ENCODE measurements at regions of chr21 and their contacts with region 1.

Region 1: GRCh38 chr21:42164064-42164789 is 54.7 kb upstream of the ABCG1 start:
- DNase-seq: peak; percentile 48
- H3K4me3 Mint-ChIP-seq: no peak overlapping the region
- H3K27ac Mint-ChIP-seq: no peak overlapping the region
- H3K4me1 Mint-ChIP-seq: no peaks in the 10 kb centered on the region
- H3K27me3 Mint-ChIP-seq: peaks cover 7% of the 10 kb centered on the region
- CTCF ChIP-seq: peak; percentile 17

Region 2: DNA sequence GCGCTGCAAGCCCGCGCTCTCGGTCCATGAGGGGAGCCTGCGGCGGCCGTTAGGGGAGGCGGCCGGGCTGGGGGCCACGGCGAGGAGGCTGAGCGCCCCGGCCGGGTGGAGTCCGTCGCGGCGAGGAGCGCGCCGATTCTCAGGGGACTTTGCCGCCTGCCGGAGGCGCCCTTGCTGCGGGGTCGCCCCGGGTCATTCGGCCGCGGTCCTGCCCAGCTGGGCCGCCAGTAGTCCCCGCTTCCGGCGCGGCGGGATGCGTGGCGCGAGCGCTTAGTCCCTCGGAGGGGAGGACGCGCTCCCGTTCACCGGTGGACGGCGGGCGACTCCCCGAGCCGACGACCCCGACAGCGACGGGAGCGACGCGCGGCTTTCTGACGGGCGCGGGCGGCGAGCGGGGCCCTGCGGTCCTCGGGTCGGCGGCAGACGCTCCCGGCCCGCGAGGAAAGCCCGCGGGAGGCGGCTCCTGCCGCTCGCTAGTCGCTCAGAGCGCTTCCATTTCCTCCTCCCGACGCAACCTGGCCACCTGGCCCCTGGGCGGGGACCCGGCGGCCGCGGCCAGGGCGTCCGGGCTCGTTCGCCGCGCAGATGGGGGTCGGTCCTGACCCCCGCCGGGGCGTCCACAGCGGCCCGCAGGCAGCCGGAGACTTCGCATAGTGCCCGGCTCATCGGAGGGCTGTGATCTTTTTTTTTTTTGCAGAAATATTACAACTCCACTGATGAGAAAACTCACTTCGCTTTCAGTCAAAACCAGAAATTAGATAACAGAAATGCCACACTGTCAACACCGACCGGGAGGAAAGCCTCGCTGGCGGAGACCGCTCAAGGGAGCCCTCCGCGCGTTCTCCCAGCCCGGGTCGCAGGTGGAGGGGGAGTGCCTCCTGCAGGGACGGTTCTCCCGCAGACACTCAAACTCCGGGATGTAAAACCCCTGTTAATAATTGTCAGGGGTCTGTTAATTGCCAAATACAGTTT is 153.4 kb before region 1 on chr21:
- CTCF ChIA-PET with region 1: no interaction called
- intact Hi-C with region 1: no loop called
- DNase-seq: peak; percentile 19
- H3K4me3 Mint-ChIP-seq: peak overlapping the region; percentile 94
- H3K27ac Mint-ChIP-seq: peak overlapping the region; percentile 98
- H3K4me1 Mint-ChIP-seq: peaks cover 8% of the 10 kb centered on the region
- H3K27me3 Mint-ChIP-seq: peaks cover 22% of the 10 kb centered on the region
- CTCF ChIP-seq: no peak

Region 3: DNA sequence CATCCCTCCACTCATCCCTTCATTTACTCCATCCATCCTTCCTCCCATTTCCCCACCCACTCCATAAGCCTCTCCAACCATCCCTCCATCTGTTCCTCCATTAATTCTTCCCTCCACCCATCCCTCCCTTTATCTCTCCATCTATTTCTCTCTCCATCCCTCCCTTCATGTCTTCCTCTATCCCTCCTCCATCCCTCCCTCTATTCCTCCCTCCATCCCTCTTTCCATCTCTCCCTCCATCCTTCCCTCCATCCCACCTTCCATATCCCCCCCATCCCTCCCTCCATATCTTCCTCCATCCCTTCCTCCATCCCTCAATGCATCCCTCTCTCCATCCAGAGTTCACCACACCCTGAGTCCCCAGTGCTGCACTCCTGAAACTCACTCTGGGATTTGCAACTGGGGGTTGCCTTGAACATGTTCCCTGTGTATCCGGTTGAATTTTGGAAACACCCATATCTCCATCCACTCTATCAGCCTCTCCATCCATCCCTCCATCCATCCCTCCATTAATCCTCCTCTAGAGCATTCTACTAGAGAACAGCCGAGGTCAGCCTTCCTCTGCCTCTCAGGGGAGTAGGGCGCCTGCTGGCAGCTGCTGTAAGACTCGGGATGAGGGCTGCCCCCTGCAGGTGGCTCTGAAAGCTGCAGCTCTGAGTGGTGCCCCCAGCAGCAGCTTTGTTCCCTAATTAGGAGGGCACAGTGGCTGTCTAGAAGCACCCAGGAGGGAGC is 94.1 kb after region 1 on chr21:
- CTCF ChIA-PET with region 1: interaction called, 11 read pairs
- intact Hi-C with region 1: no loop called
- DNase-seq: peak; percentile 68
- H3K4me3 Mint-ChIP-seq: no peak overlapping the region
- H3K27ac Mint-ChIP-seq: no peak overlapping the region
- H3K4me1 Mint-ChIP-seq: no peaks in the 10 kb centered on the region
- H3K27me3 Mint-ChIP-seq: peaks cover 58% of the 10 kb centered on the region
- CTCF ChIP-seq: peak; percentile 56

Region 4: GRCh38 chr21:42299324-42300044 is 135.3 kb after region 1 on chr21:
- CTCF ChIA-PET with region 1: no interaction called
- intact Hi-C with region 1: no loop called
- DNase-seq: peak; percentile 16
- H3K4me3 Mint-ChIP-seq: no peak overlapping the region
- H3K27ac Mint-ChIP-seq: no peak overlapping the region
- H3K4me1 Mint-ChIP-seq: no peaks in the 10 kb centered on the region
- H3K27me3 Mint-ChIP-seq: peaks cover 17% of the 10 kb centered on the region
- CTCF ChIP-seq: no peak

Region 5: GRCh38 chr21:42456457-42456856 is 292.2 kb after region 1 on chr21:
- CTCF ChIA-PET with region 1: no interaction called
- intact Hi-C with region 1: loop called (anchors 10 kb)
- DNase-seq: no peak
- H3K4me3 Mint-ChIP-seq: no peak overlapping the region
- H3K27ac Mint-ChIP-seq: no peak overlapping the region
- H3K4me1 Mint-ChIP-seq: peaks cover 3% of the 10 kb centered on the region
- H3K27me3 Mint-ChIP-seq: no peaks in the 10 kb centered on the region
- CTCF ChIP-seq: no peak

Region 6: DNA sequence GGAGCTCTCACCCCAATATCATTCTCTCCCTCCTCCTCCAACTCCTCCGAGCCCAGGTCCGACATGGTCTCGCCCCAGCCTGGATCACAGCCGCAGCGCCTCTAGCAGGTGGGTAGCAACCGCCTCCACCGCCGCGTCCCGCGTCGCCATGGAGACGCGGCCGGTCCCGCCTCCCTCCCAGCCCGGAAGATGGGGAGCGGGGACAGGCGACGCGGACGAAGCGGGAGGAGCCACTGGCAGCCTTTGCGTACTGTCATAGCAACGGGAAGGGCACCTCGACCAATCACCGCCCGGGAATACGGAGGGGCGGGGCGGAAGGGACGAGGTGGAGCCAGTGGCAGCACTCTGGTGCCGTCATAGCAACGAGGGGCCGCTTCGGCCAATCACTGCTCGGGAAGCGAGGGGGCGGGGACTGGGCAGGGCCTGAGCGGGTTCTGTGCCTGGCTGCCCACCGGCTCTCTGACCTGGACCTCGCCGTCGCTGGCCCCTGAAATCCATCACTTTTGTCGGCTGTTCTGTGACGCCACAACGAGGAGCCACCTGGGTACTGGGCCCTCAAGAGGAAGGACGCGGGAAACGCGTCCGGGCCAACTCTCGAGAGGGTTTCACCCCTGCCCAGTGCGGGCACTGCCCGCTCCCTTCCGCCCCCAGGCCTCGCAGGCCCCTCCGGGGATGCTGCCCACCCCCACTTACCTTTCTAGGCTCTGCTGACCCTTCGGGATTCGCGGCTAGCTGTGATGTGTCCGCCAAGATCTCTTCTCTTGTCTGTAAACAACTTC is 332.1 kb after region 1 on chr21 and contains the start of gene RSPH1:
- CTCF ChIA-PET with region 1: no interaction called
- intact Hi-C with region 1: no loop called
- DNase-seq: peak; percentile 98
- H3K4me3 Mint-ChIP-seq: peak within 1 kb of the TSS; percentile 100
- H3K27ac Mint-ChIP-seq: peak within 1 kb of the TSS; percentile 91
- H3K4me1 Mint-ChIP-seq: peaks cover 18% of the 10 kb centered on the region
- H3K27me3 Mint-ChIP-seq: no peaks in the 10 kb centered on the region
- CTCF ChIP-seq: no peak
- total RNA-seq, gene RSPH1: 2.2 and 3.3 TPM in 2 replicates